Endothelial cell of umbilical vein (primary cell): ENCODE measurements at regions of chr7 and their contacts with region 1.

Region 1: GRCh38 chr7:66033471-66034385 is 41.9 kb upstream of the ASL start:
- DNase-seq: no peak
- H3K4me3 ChIP-seq: no peak overlapping the region
- H3K27ac ChIP-seq: no peak overlapping the region
- H3K4me1 ChIP-seq: no peaks in the 10 kb centered on the region
- H3K27me3 ChIP-seq: no peaks in the 10 kb centered on the region
- CTCF ChIP-seq: no peak
- POLR2A ChIP-seq: no peak

Region 2: DNA sequence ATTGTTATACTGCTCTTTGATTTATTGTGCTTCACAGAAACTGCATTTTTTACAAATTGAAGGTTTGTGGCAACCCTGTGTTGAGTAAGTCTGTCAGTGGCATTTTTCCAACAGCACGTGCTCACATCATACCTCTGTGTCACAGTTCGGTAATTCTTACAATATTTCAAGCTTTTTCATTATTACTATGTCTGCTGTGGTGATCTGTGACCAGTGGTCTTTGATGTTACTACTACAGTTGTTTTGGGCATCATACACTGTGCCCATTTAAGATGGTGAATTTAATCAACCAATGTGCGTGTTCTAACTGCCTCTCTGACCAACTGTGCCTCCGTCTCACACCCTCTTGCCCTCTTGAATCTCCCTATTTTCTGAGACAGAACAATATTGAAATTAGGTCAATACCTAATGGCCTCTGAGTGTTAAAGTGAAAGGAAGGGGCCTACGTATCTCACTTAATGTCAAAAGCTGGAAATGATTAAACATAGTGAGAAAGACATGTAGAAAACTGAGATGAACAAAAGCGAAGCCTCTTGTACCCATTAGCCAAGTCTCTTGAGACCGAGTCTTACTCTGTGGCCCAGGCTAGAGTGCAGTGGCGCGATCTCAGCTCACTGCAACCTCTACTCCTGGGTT is 21.7 kb after region 1 on chr7:
- CTCF ChIA-PET with region 1: interaction called, 6 read pairs
- POLR2A ChIA-PET with region 1: interaction called, 10 read pairs
- dilution Hi-C with region 1: no loop called
- intact Hi-C with region 1: no loop called
- DNase-seq: no peak
- H3K4me3 ChIP-seq: no peak overlapping the region
- H3K27ac ChIP-seq: no peak overlapping the region
- H3K4me1 ChIP-seq: no peaks in the 10 kb centered on the region
- H3K27me3 ChIP-seq: no peaks in the 10 kb centered on the region
- CTCF ChIP-seq: no peak
- POLR2A ChIP-seq: no peak

Region 3: GRCh38 chr7:66075590-66076461 is 42.1 kb after region 1 on chr7 and contains the start of gene ASL:
- CTCF ChIA-PET with region 1: interaction called, 8 read pairs
- POLR2A ChIA-PET with region 1: no interaction called
- dilution Hi-C with region 1: no loop called
- intact Hi-C with region 1: loop called (anchors 1 kb)
- DNase-seq: peak; percentile 93
- H3K4me3 ChIP-seq: peak within 1 kb of the TSS; percentile 59 to 88 (median 75)
- H3K27ac ChIP-seq: peak within 1 kb of the TSS; percentile 61
- H3K4me1 ChIP-seq: peaks cover 11% of the 10 kb centered on the region
- H3K27me3 ChIP-seq: no peaks in the 10 kb centered on the region
- CTCF ChIP-seq: no peak
- POLR2A ChIP-seq: peak; percentile 86
- total RNA-seq, gene ASL: 48.4 and 50.5 TPM in 2 replicates

Region 4: GRCh38 chr7:66204822-66205740 is 171.4 kb after region 1 on chr7 and contains the start of gene TPST1:
- CTCF ChIA-PET with region 1: interaction called, 3 read pairs
- POLR2A ChIA-PET with region 1: no interaction called
- dilution Hi-C with region 1: no loop called
- intact Hi-C with region 1: loop called (anchors 5 kb)
- DNase-seq: peak; percentile 97
- H3K4me3 ChIP-seq: peak within 1 kb of the TSS; percentile 70 to 71 (median 71)
- H3K27ac ChIP-seq: peak within 1 kb of the TSS; percentile 26
- H3K4me1 ChIP-seq: peaks cover 9% of the 10 kb centered on the region
- H3K27me3 ChIP-seq: no peaks in the 10 kb centered on the region
- CTCF ChIP-seq: peak; percentile 48 to 78
- POLR2A ChIP-seq: peak; percentile 93
- total RNA-seq, gene TPST1: 18.7 and 19.1 TPM in 2 replicates

Region 5: GRCh38 chr7:66557608-66558143 is 523.9 kb after region 1 on chr7:
- CTCF ChIA-PET with region 1: interaction called, 19 read pairs
- POLR2A ChIA-PET with region 1: no interaction called
- dilution Hi-C with region 1: no loop called
- intact Hi-C with region 1: no loop called
- DNase-seq: peak; percentile 32
- H3K4me3 ChIP-seq: no peak overlapping the region
- H3K27ac ChIP-seq: no peak overlapping the region
- H3K4me1 ChIP-seq: no peaks in the 10 kb centered on the region
- H3K27me3 ChIP-seq: no peaks in the 10 kb centered on the region
- CTCF ChIP-seq: peak; percentile 82 to 96
- POLR2A ChIP-seq: no peak